ENCODE measurements at regions of chr16 and their contacts with region 1.

Region 1: GRCh38 chr16:4828567-4829321 is 18.3 kb downstream of the GLYR1 start:
- DNase-seq: no peak
- H3K27ac ChIP-seq: no peak overlapping the region
- CTCF ChIP-seq: no peak

Region 2: DNA sequence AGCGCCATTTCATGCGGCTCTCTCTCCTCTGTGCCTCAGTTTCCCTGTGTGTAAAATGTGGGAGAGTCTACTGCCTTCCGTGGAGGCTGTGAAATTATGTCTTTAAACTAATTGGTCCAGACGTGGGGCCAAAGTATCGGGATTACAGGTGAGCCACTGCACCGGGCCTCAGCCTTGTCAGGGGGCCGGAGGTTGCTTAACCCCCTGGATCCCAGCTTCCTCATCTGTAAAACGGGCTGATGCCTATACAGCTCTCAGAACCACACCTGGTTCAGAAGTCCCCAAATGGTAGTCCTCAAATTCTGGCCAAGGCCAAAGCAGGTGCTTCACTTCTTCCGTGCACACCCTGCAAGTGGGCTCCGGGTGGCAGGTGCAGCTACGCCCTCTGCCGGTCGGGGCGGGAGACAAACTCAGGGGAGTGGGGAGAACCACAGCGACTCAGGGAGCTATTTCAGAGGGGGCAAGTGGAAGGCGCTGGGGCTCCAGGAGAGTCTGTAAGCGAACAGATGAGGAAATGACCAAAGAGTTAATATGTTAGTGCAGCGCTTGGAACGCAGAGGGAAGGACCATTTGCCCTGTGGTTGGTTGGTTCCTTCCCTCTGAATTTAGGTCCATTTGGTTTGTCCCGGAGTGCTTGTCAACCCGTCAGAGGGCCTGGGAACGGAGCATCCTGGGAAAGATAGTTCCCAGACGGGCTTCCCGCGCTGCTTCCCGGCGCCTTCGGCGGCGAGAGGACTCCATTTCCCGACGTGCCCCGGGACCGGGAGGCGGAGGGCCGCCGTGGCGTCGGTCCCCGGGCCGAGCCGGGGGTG is 204.5 kb before region 1 on chr16 and contains the start of gene MGRN1:
- CTCF ChIA-PET with region 1: interaction called, 10 read pairs
- POLR2A ChIA-PET with region 1: no interaction called
- DNase-seq: peak; percentile 95
- H3K27ac ChIP-seq: peak within 1 kb of the TSS; percentile 83
- CTCF ChIP-seq: peak; percentile 94

Region 3: DNA sequence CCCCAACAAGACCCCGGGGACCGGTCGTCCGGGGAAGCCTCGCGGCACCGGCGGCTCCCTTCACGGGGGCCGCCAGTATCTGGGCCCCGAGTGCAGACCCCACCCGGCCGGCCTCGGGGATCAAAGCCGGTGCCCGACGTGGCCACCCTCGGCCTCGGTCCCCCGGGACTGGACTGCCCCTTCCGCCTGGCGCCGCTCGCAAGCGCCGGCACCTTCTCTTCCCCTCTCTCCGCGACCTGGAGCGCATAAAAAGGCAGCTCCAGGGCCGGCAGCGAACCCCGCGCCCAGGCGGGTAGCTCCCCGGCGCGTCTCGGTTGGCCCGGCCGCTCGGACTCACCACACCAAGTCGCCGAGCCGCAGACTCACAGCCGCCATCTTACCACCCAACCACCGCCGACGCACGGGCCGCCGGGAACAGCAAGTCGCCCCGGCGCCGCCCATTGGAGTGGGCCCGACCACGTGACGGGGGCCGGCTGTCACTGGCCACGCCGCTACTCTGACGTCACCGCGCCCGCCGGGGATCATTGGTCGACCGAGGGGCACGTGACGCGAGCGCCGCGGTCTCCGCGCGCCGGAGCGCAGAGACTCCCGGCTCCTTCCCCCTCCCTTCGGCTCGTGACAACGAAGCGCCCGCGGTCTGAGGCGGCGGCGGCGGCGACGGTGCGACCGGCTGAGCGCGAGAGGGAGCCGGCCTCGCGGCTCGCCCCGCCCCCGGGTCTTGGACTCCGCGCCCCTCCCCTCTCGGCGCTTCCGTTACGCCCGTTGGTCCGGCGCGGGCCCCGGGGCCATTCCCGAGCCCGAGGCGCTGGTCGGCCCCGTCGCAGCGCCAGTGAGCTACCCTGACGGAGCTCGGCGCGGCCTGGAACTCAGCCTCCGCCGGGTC is 18.4 kb after region 1 on chr16 and contains the starts of genes GLYR1 and UBN1:
- CTCF ChIA-PET with region 1: no interaction called
- POLR2A ChIA-PET with region 1: no interaction called
- DNase-seq: peak; percentile 96
- H3K27ac ChIP-seq: peak within 1 kb of the TSS; percentile 92
- CTCF ChIP-seq: no peak